MCF 10A (cell line): ENCODE measurements at regions of chr14 and their contacts with region 1.

Region 1: DNA sequence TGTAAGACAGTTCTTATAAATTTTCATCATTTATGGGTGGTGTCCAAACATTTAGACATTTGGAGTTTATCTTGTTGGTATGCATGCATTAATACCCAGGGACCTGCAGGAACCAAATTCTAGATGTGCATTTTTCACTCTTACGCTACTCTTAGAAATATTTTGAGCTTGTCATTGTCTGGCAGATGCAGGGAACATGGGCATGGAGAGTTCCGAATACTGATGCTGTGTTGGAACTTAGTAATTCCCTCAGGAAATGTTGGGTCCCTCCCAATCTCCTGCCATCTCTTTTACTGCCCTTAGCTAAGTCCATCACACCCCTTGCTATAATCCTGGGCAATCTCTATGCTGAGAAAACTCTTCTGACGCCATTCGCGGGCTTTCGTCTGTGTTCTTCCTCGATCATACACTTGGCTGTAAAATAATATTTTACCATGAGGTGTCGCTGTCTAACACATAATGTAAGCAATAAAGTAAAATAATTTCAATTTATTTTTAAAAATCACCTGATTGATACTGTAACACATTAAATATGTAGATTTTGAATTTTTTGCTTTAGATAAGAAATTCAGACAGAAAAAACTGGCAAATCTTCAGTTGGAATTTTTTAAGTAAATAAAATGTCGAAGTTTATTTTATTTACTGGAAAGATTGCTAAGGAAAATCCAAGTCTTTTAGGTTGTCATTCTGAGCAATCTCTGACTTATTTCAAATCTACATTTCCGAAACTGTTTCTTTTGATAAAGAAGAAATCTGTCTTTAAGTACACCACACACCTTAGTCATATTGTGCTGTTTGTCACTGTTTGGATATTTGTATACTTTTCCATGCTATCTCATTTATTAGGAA is 304.1 kb upstream of the SSTR1 start:
- DNase-seq: peak; percentile 55
- H3K4me3 Mint-ChIP-seq: no peak overlapping the region
- H3K27ac Mint-ChIP-seq: no peak overlapping the region
- H3K4me1 Mint-ChIP-seq: peaks cover 6% of the 10 kb centered on the region
- H3K27me3 Mint-ChIP-seq: no peaks in the 10 kb centered on the region
- CTCF ChIP-seq: peak; percentile 70

Region 2: DNA sequence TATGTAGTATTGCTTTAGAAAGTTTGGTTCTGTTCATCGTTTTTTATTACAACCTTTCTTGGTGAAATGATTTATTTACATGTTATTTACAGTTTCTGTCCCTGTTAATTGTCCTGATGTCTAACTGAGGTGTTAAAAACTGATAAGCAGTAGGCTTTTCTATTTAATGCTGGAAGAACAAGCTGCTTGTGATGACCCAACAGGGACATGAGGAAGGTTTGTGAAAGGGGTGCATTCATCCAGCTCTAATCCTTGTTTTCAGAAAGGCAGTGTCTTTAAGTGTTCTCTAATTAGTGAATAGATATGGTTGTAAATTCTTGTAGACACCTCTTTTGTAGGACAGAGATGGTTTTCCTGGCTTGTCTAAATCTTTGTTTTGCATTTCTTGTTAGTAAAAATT is 499.9 kb before region 1 on chr14:
- CTCF ChIA-PET with region 1: no interaction called
- POLR2A ChIA-PET with region 1: no interaction called
- intact Hi-C with region 1: no loop called
- DNase-seq: no peak
- H3K4me3 Mint-ChIP-seq: no peak overlapping the region
- H3K27ac Mint-ChIP-seq: no peak overlapping the region
- H3K4me1 Mint-ChIP-seq: peaks cover 5% of the 10 kb centered on the region
- H3K27me3 Mint-ChIP-seq: no peaks in the 10 kb centered on the region
- CTCF ChIP-seq: no peak

Region 3: GRCh38 chr14:37924622-37925021 is 21.1 kb after region 1 on chr14:
- CTCF ChIA-PET with region 1: interaction called, 12 read pairs
- POLR2A ChIA-PET with region 1: no interaction called
- intact Hi-C with region 1: no loop called
- DNase-seq: no peak
- H3K4me3 Mint-ChIP-seq: no peak overlapping the region
- H3K27ac Mint-ChIP-seq: no peak overlapping the region
- H3K4me1 Mint-ChIP-seq: no peaks in the 10 kb centered on the region
- H3K27me3 Mint-ChIP-seq: no peaks in the 10 kb centered on the region
- CTCF ChIP-seq: no peak

Region 4: GRCh38 chr14:38056270-38056669 is 152.7 kb after region 1 on chr14:
- CTCF ChIA-PET with region 1: no interaction called
- POLR2A ChIA-PET with region 1: no interaction called
- intact Hi-C with region 1: no loop called
- DNase-seq: no peak
- H3K4me3 Mint-ChIP-seq: no peak overlapping the region
- H3K27ac Mint-ChIP-seq: no peak overlapping the region
- H3K4me1 Mint-ChIP-seq: peaks cover 6% of the 10 kb centered on the region
- H3K27me3 Mint-ChIP-seq: no peaks in the 10 kb centered on the region
- CTCF ChIP-seq: no peak

Region 5: GRCh38 chr14:38605193-38606114 is 701.9 kb after region 1 on chr14:
- CTCF ChIA-PET with region 1: interaction called, 38 read pairs
- POLR2A ChIA-PET with region 1: no interaction called
- intact Hi-C with region 1: loop called (anchors 2 kb)
- DNase-seq: no peak
- H3K4me3 Mint-ChIP-seq: no peak overlapping the region
- H3K27ac Mint-ChIP-seq: no peak overlapping the region
- H3K4me1 Mint-ChIP-seq: peaks cover 5% of the 10 kb centered on the region
- H3K27me3 Mint-ChIP-seq: no peaks in the 10 kb centered on the region
- CTCF ChIP-seq: peak; percentile 20

Region 6: GRCh38 chr14:38862366-38862765 is 958.8 kb after region 1 on chr14:
- CTCF ChIA-PET with region 1: interaction called, 148 read pairs
- POLR2A ChIA-PET with region 1: interaction called, 3 read pairs
- intact Hi-C with region 1: loop called (anchors 1 kb)
- DNase-seq: no peak
- H3K4me3 Mint-ChIP-seq: no peak overlapping the region
- H3K27ac Mint-ChIP-seq: no peak overlapping the region
- H3K4me1 Mint-ChIP-seq: no peaks in the 10 kb centered on the region
- H3K27me3 Mint-ChIP-seq: peaks cover 9% of the 10 kb centered on the region
- CTCF ChIP-seq: no peak